ENCODE measurements at regions of chr1 and their contacts with region 1.

Region 1: DNA sequence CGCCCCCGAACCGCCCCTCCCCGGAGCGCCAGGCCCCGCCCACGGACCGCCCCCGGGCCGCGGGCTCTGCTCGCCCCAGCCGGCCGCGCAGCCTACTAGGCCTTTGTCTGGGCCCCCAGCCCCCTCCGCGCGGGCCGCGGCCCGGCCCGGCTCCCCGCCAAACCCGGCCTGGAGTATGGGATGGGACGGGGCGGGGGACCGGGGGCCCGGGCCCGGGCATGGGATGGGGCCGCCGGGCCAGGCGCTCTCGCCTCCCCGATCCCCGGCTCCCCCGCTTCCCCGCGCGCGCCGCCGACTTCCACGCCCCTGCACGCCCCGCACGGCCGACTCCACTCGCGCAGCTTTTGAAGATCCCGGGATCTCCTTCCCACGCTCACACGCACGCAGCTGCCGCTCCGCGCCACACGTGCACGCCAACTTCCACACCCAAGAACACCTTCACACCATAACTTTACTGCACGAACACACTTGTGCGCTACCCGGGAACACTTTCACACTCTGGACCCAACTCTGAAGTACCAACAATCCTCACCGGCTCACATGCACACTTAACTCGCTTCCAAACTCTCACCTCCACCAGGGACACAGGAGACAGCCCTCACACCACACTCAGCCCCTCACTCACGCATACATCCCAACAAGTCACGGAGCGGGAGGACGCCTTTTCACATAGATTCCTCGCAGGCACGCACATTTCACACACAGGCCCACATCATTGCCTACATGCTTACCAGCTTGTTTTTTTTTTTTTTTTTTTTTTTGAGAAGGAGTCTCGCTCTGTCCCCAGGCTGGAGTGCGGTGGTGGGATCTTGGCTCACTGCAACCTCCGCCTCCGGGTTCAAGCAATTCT is 487 bp upstream of the HSPG2 start:
- DNase-seq: peak; percentile 82
- H3K4me3 ChIP-seq: peak overlapping the region in 2 of 3 experiments; percentile 37 to 44
- H3K27ac ChIP-seq: peak overlapping the region; percentile 98
- H3K4me1 ChIP-seq: peaks cover 51% of the 10 kb centered on the region
- H3K27me3 ChIP-seq: no peaks in the 10 kb centered on the region
- CTCF ChIP-seq: no peak
- POLR2A ChIP-seq: no peak

Region 2: GRCh38 chr1:21384620-21385019 is 553.0 kb before region 1 on chr1:
- CTCF ChIA-PET with region 1: no interaction called
- POLR2A ChIA-PET with region 1: no interaction called
- dilution Hi-C with region 1: no loop called
- intact Hi-C with region 1: no loop called
- DNase-seq: no peak
- H3K4me3 ChIP-seq: no peak overlapping the region
- H3K27ac ChIP-seq: no peak overlapping the region
- H3K4me1 ChIP-seq: no peaks in the 10 kb centered on the region
- H3K27me3 ChIP-seq: peaks cover 10 to 21% of the 10 kb centered on the region in 2 experiments
- CTCF ChIP-seq: no peak
- POLR2A ChIP-seq: no peak

Region 3: DNA sequence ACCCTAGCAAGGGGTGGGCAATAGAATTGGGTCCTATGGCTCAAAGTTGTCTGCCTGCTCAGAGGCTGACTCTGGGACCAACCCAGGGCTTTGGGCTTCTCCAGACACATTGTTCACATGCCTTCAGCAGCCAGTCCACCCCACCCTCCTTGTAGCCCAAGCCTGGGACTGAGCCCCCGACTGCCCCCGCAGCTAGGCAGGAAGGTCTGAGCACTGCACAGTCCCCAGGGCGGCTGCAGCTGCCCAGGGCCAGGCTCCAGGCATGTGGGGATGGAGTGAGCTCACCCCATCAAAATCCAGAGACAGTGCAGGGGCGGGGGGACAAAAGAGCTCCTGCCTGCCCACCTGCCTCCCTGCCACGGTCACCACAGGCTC is 36.1 kb before region 1 on chr1:
- CTCF ChIA-PET with region 1: interaction called, 11 read pairs
- POLR2A ChIA-PET with region 1: interaction called, 6 read pairs
- dilution Hi-C with region 1: no loop called
- intact Hi-C with region 1: loop called (anchors 1 kb)
- DNase-seq: peak; percentile 81
- H3K4me3 ChIP-seq: no peak overlapping the region
- H3K27ac ChIP-seq: peak overlapping the region; percentile 87
- H3K4me1 ChIP-seq: peaks cover 92% of the 10 kb centered on the region
- H3K27me3 ChIP-seq: no peaks in the 10 kb centered on the region
- CTCF ChIP-seq: peak; percentile 18 to 46
- POLR2A ChIP-seq: no peak

Region 4: GRCh38 chr1:21909787-21910503 is 27.7 kb before region 1 on chr1:
- CTCF ChIA-PET with region 1: interaction called, 13 read pairs
- POLR2A ChIA-PET with region 1: interaction called, 5 read pairs
- dilution Hi-C with region 1: no loop called
- intact Hi-C with region 1: no loop called
- DNase-seq: peak; percentile 96
- H3K4me3 ChIP-seq: no peak overlapping the region
- H3K27ac ChIP-seq: peak overlapping the region; percentile 94
- H3K4me1 ChIP-seq: peaks cover 95% of the 10 kb centered on the region
- H3K27me3 ChIP-seq: no peaks in the 10 kb centered on the region
- CTCF ChIP-seq: no peak
- POLR2A ChIP-seq: peak; percentile 88

Region 5: GRCh38 chr1:21924503-21925005 is 13.0 kb before region 1 on chr1:
- CTCF ChIA-PET with region 1: interaction called, 14 read pairs
- POLR2A ChIA-PET with region 1: interaction called, 8 read pairs
- dilution Hi-C with region 1: no loop called
- intact Hi-C with region 1: loop called (anchors 1 kb)
- DNase-seq: peak; percentile 99
- H3K4me3 ChIP-seq: no peak overlapping the region
- H3K27ac ChIP-seq: peak overlapping the region; percentile 79
- H3K4me1 ChIP-seq: peaks cover 92% of the 10 kb centered on the region
- H3K27me3 ChIP-seq: no peaks in the 10 kb centered on the region
- CTCF ChIP-seq: no peak
- POLR2A ChIP-seq: peak; percentile 84

Region 6: GRCh38 chr1:21956720-21957552 is 19.3 kb after region 1 on chr1:
- CTCF ChIA-PET with region 1: interaction called, 95 read pairs
- POLR2A ChIA-PET with region 1: interaction called, 5 read pairs
- dilution Hi-C with region 1: no loop called
- intact Hi-C with region 1: loop called (anchors 1 kb)
- DNase-seq: peak; percentile 89
- H3K4me3 ChIP-seq: no peak overlapping the region
- H3K27ac ChIP-seq: peak overlapping the region; percentile 80
- H3K4me1 ChIP-seq: peaks cover 41% of the 10 kb centered on the region
- H3K27me3 ChIP-seq: no peaks in the 10 kb centered on the region
- CTCF ChIP-seq: no peak
- POLR2A ChIP-seq: no peak

Region 7: DNA sequence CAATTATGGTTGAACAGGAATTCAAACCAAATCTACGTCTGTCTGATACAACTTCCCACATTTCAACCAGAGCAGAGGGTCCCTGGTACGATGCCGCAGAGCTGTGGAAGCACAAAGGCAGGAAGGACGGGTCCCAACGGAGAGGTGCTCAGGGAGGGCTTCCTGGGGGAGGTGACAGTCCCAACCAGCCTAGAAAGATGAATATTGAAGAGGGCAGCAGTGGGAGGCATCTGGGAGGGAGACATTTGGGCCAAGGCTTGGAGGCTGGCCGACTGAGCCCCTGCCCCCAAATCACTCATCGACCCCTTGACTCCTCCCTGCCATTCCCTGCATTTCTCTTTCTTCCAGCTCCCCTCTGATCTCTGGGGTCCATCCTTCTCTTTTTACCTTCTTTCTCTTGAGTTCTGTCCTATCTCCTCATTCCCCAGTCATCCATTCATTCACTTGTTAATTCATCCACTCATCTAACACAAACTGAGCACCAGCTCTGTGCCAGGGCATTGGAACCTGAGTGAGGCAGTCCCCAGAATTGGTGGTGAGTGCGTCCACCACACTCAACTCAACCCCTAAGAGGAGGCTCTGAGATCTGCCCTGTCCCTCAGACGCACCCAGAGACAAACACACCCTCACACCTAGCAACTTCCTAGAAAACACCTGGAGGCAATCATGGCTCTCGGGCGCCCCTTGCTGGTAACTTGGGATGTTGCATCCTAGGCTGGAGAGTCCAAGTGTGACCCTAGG is 26.1 kb after region 1 on chr1:
- CTCF ChIA-PET with region 1: interaction called, 95 read pairs
- POLR2A ChIA-PET with region 1: interaction called, 3 read pairs
- dilution Hi-C with region 1: no loop called
- intact Hi-C with region 1: loop called (anchors 1 kb)
- DNase-seq: peak; percentile 81
- H3K4me3 ChIP-seq: no peak overlapping the region
- H3K27ac ChIP-seq: peak overlapping the region; percentile 1
- H3K4me1 ChIP-seq: peaks cover 26% of the 10 kb centered on the region
- H3K27me3 ChIP-seq: no peaks in the 10 kb centered on the region
- CTCF ChIP-seq: peak; percentile 85 to 91
- POLR2A ChIP-seq: peak; percentile 29

Region 8: GRCh38 chr1:22001409-22001808 is 63.8 kb after region 1 on chr1 and contains the start of gene CELA3A:
- CTCF ChIA-PET with region 1: no interaction called
- POLR2A ChIA-PET with region 1: no interaction called
- dilution Hi-C with region 1: no loop called
- intact Hi-C with region 1: loop called (anchors 2 kb)
- DNase-seq: no peak
- H3K4me3 ChIP-seq: no peak within 1 kb of the TSS
- H3K27ac ChIP-seq: no peak within 1 kb of the TSS
- H3K4me1 ChIP-seq: peaks cover 29% of the 10 kb centered on the region
- H3K27me3 ChIP-seq: no peaks in the 10 kb centered on the region
- CTCF ChIP-seq: no peak
- POLR2A ChIP-seq: no peak
- total RNA-seq, gene CELA3A: not detected in 2 replicates